BJ (cell line): ENCODE measurements at regions of chr7 and their contacts with region 1.

Region 1: DNA sequence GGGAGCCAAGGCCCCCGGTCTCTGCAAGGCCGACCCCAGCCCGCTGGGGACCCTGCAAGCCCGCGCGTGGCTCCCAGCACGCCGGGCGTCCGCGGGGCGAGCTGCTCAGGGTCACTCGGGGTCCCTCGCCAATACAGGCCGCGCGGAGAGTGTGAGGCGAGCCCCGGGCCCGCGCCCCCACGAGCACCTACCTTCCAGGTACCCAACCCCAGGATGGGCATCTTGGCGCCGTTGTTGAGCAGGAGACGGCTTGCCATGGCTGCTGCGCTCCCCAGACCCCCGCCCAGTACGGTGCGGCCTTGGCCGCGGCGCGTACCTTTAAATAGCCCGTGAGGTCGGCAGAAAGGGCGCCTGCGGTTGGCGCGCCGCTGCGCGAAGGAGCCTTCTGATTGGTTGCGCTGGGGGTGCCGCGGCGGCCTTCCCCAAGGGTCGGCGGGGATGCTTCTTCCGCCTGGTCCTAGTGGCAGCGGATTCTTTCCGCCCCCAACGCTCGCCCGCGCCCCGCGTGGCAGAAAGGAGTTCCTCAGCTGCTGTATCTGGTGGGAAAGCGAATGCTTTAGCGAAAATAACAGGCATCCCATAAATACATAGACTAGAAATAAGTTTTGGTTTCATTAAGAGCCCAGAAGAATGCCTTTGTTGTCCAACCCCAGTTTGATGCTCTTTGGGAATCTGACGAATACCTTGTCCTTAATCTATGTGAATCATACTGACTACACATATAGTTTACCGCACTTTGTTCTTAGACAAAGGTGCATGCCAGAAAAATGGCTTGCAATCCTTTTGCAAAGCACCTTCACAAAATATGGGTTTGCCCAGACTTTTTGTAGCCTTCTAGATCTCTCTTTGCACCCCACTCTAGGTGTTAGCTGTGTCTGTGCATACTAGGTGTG is at the start of gene AKR1B1:
- DNase-seq: peak; percentile 59
- H3K4me3 ChIP-seq: peak within 1 kb of the TSS; percentile 82
- H3K27me3 ChIP-seq: no peaks in the 10 kb centered on the region
- CTCF ChIP-seq: peak; percentile 80
- polyA plus RNA-seq, gene AKR1B1: 257 and 331 TPM in 2 replicates

Region 2: GRCh38 chr7:134327896-134328295 is 131.2 kb before region 1 on chr7:
- CTCF ChIA-PET with region 1: no interaction called
- POLR2A ChIA-PET with region 1: no interaction called
- DNase-seq: no peak
- H3K4me3 ChIP-seq: no peak overlapping the region
- H3K27me3 ChIP-seq: peaks cover 3% of the 10 kb centered on the region
- CTCF ChIP-seq: peak; percentile 56

Region 3: DNA sequence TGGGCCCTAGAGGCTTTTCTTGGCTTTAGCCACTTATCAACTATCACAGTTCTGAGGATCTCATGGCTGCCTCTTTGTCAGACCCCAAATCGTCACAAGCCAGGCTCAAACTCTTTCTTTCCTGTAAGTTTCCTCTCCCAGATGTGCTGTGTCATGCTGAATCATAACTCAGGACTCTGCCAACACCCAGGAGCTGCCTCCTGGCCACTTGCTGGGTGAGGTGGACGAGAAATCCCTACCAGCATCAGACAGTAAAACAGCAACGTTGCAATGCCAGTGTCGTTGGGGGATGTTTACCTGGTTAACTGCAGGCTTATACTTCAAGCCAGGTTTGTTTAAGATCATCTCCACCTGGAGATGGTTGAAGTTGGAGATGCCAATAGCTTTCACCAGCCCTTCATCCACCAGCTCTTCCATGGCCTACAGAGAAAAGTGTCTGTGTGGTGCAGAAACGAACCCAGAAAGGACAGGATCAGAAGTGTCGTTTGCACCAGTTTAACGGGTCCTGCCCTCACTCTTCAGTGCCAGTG is 10.3 kb before region 1 on chr7:
- CTCF ChIA-PET with region 1: interaction called, 53 read pairs
- POLR2A ChIA-PET with region 1: no interaction called
- DNase-seq: peak; percentile 66
- H3K4me3 ChIP-seq: no peak overlapping the region
- H3K27me3 ChIP-seq: no peaks in the 10 kb centered on the region
- CTCF ChIP-seq: no peak

Region 4: DNA sequence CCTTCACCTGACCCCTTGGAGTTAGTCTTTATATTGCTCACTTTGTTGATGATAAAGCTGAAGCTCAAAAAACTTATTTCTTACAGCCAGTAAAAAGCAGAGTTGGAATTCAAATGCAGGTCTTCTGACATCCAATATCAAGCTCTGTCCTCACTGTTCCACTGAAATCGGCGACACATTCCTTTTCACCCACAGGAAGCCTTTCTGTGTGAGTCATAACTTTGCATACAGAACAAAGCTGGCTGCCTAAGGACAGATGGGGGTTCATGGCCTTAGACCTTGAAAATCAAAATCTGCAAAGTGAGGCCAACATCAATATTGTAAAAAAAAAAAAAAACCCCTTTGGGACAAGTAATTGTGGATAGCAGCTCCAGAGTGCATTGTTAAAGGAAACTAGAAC is 21.7 kb after region 1 on chr7:
- CTCF ChIA-PET with region 1: interaction called, 46 read pairs
- POLR2A ChIA-PET with region 1: no interaction called
- DNase-seq: no peak
- H3K4me3 ChIP-seq: no peak overlapping the region
- H3K27me3 ChIP-seq: no peaks in the 10 kb centered on the region
- CTCF ChIP-seq: no peak

Region 5: GRCh38 chr7:134547397-134548054 is 88.5 kb after region 1 on chr7:
- CTCF ChIA-PET with region 1: no interaction called
- POLR2A ChIA-PET with region 1: no interaction called
- DNase-seq: no peak
- H3K4me3 ChIP-seq: peak overlapping the region; percentile 35
- H3K27me3 ChIP-seq: peaks cover 8% of the 10 kb centered on the region
- CTCF ChIP-seq: peak; percentile 89